Ascending aorta (tissue), 2 donors: ENCODE measurements at regions of chr4 and their contacts with region 1.

Region 1: GRCh38 chr4:39044364-39044955 is 12.3 kb upstream of the TMEM156 start:
- DNase-seq: peak; percentile 81 to 95
- H3K4me3 ChIP-seq: peak overlapping the region; percentile 85 to 93
- H3K27ac ChIP-seq: peak overlapping the region; percentile 77 to 87
- H3K4me1 ChIP-seq: no peaks in the 10 kb centered on the region
- H3K27me3 ChIP-seq: no peaks in the 10 kb centered on the region
- CTCF ChIP-seq: no peak

Region 2: DNA sequence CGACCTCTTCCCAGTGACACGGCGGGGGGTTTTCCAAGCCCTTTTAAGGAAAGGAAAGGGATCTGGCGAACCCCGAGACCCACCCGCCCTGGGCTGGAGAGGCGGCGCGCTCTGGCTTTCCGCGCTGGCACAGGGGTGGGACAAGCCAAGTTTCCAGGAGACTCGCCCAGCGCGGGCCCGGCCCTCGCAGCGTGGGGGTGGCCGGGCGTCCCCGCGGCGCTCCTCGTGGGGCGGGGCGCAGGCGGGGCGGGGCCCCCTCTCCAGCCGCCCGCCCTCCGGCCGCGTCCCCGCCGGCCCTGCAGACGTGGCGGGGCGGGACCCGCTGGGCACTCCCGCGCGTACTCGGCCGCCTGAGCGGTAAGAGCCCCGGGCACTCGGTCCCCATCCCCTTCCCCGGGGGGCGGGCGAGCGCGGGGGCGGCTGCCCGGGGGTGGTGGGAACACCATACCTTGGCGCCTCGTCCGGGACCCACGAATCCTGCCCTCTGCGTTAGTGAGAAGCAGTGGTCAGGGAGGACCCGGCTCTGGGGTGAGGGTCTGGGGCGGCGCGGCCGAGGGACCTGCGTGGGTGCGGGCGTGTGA is 176.9 kb before region 1 on chr4 and contains the start of gene FAM114A1:
- intact Hi-C with region 1: loop called (anchors 10 kb)
- DNase-seq: peak in 1 of 2 donors; percentile 89
- H3K4me3 ChIP-seq: peak within 1 kb of the TSS; percentile 74 to 83
- H3K27ac ChIP-seq: peak within 1 kb of the TSS; percentile 94 to 96
- H3K4me1 ChIP-seq: peaks cover 0 to 13% of the 10 kb centered on the region in 2 donors
- H3K27me3 ChIP-seq: no peaks in the 10 kb centered on the region
- CTCF ChIP-seq: no peak
- total RNA-seq, gene FAM114A1: 45.7 TPM

Region 3: DNA sequence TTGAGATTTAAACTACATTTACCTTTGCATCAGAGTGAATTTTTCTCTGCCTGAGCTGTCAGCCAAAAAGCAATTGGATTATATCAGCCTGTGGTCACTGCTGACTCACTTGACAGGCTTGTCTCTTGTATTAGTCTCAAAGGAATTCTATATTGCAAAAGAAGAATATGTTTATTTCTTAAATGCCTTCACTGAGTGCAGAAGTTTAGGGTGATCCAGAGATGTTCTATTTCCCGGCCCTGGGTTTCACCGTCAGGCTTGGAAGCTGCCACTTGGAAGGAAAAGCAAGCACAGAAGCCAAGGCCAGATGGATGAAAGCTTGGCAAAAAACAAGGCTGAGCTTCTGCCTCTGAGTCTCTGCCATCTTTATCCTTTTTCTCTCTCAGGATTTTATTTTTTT is 95.9 kb before region 1 on chr4:
- intact Hi-C with region 1: loop called (anchors 5 kb)
- DNase-seq: peak in 1 of 2 donors; percentile 64
- H3K4me3 ChIP-seq: no peak overlapping the region
- H3K27ac ChIP-seq: no peak overlapping the region
- H3K4me1 ChIP-seq: no peaks in the 10 kb centered on the region
- H3K27me3 ChIP-seq: no peaks in the 10 kb centered on the region
- CTCF ChIP-seq: no peak

Region 4: GRCh38 chr4:39365830-39366771 is 321.6 kb after region 1 on chr4 and contains the start of gene RFC1:
- intact Hi-C with region 1: loop called (anchors 2 kb)
- DNase-seq: peak; percentile 56 to 95
- H3K4me3 ChIP-seq: peak within 1 kb of the TSS; percentile 91 to 95
- H3K27ac ChIP-seq: peak within 1 kb of the TSS; percentile 80 to 82
- H3K4me1 ChIP-seq: peaks cover 0 to 9% of the 10 kb centered on the region in 2 donors
- H3K27me3 ChIP-seq: no peaks in the 10 kb centered on the region
- CTCF ChIP-seq: no peak
- total RNA-seq, gene RFC1: 39.5 TPM

Region 5: DNA sequence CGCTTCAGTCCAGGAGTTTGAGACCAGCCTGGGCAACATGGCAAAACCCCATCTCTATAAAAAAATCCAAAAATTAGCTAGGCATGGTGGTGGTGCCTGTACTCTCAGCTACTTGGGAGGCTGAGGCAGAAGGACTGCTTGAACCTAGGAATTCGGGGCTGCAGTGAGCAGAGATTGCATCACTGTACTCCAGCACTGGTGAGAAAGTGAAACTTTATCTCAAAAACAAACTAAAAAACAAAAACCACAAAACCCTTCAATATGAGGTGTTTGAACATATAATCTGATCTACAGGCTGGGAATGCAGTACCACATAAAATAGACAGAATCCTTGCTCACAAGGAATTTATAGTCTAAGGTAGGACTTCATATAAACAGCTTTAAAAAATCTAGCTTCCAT is 829.4 kb after region 1 on chr4:
- intact Hi-C with region 1: no loop called
- DNase-seq: no peak
- H3K4me3 ChIP-seq: no peak overlapping the region
- H3K27ac ChIP-seq: no peak overlapping the region
- H3K4me1 ChIP-seq: no peaks in the 10 kb centered on the region
- H3K27me3 ChIP-seq: no peaks in the 10 kb centered on the region
- CTCF ChIP-seq: no peak

Region 6: DNA sequence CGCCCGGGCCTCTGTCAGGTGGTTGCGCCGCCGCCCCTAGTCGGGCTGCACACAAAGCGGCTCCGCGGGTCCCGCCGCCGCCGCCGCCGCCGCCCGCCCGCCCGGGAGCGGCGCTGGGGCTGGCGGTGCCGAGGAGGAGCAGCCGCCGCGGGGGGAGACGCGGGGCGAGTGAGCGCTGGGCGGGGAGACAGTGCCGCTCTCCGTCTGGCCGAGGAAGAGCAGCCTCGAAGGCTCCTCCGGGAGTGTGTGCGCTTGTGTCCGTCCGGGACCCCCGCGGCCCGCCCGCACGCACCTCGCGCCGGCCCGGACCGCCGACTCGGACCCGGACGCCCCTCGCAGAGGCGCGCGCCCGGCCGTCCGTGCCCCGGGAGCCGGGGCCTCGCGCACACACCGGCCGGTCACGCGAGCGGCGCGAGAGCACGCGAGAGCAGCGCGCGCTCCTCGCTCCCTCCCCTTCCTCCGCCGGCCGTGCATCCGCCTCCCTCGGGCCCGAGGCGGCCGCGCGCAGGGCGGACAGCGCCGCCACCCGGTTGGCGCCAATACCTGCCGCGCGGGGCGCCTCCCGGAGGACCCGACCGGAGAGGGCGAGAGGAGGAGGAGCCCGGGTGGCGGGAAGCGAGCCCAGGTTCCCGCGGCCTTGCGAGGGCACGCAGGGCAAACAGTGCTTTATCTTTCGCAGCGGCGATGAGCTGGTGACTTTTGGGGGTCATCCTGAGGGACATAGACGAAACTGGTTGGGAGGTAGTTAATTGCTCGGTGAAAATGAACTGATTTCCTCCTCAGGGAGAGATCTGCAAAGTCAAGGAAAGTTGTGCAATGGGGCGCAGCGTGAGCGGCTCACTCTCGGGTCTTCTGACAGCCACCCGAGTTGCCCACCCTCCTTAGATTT is 933.3 kb after region 1 on chr4 and contains the start of gene PDS5A:
- intact Hi-C with region 1: loop called (anchors 10 kb)
- DNase-seq: peak; percentile 44 to 93
- H3K4me3 ChIP-seq: peak within 1 kb of the TSS; percentile 98 to 99
- H3K27ac ChIP-seq: peak within 1 kb of the TSS; percentile 94 to 95
- H3K4me1 ChIP-seq: peaks cover 0 to 18% of the 10 kb centered on the region in 2 donors
- H3K27me3 ChIP-seq: no peaks in the 10 kb centered on the region
- CTCF ChIP-seq: peak; percentile 71 to 94 (median 83)
- total RNA-seq, gene PDS5A: 52.9 TPM